Activated CD4-positive, alpha-beta memory T cell treated with anti-CD3 and anti-CD28 coated beads for 36 hours (primary cell): ENCODE measurements at regions of chr10 and their contacts with region 1.

Region 1: DNA sequence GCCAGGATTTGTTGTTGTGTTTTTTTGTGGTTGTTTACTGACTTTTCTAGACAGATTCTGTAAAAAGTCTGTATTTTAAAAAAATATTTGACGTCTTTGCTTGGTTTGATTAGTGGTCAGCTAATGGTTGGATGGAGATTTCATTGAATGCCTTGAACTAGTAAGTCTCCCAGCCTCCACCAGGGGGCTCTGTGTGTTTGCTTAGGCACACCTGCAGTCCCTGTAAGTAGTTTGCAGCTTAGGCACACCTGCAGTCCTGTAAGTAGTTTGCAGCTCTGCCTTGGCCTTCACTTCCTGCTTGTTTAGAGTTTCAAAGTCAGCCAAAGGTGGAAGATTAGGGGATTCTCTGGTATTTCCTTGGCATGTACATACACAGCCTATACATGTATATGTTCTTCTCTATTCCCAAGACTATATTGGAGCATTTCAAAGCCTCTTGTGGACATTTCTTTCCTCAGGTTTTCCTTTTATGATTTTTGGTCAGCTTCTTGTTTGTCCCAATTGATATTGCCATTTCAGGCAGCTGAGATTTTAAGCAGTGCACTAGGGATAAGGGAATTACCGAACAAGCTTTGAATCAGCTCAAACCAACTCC is 101.6 kb downstream of the CCSER2 start:
- DNase-seq: peak; percentile 76
- H3K4me3 Mint-ChIP-seq: no peak overlapping the region
- H3K27ac Mint-ChIP-seq: no peak overlapping the region
- H3K4me1 Mint-ChIP-seq: peaks cover 31% of the 10 kb centered on the region
- H3K27me3 Mint-ChIP-seq: no peaks in the 10 kb centered on the region

Region 2: GRCh38 chr10:84333864-84334451 is 96.1 kb before region 1 on chr10:
- CTCF ChIA-PET with region 1: interaction called, 11 read pairs
- POLR2A ChIA-PET with region 1: no interaction called
- intact Hi-C with region 1: no loop called
- DNase-seq: peak; percentile 82
- H3K4me3 Mint-ChIP-seq: peak overlapping the region; percentile 36
- H3K27ac Mint-ChIP-seq: peak overlapping the region; percentile 78
- H3K4me1 Mint-ChIP-seq: peaks cover 40% of the 10 kb centered on the region
- H3K27me3 Mint-ChIP-seq: no peaks in the 10 kb centered on the region

Region 3: GRCh38 chr10:84397735-84398144 is 32.3 kb before region 1 on chr10:
- CTCF ChIA-PET with region 1: interaction called, 12 read pairs
- POLR2A ChIA-PET with region 1: no interaction called
- intact Hi-C with region 1: no loop called
- DNase-seq: no peak
- H3K4me3 Mint-ChIP-seq: no peak overlapping the region
- H3K27ac Mint-ChIP-seq: peak overlapping the region; percentile 6
- H3K4me1 Mint-ChIP-seq: peaks cover 27% of the 10 kb centered on the region
- H3K27me3 Mint-ChIP-seq: no peaks in the 10 kb centered on the region

Region 4: DNA sequence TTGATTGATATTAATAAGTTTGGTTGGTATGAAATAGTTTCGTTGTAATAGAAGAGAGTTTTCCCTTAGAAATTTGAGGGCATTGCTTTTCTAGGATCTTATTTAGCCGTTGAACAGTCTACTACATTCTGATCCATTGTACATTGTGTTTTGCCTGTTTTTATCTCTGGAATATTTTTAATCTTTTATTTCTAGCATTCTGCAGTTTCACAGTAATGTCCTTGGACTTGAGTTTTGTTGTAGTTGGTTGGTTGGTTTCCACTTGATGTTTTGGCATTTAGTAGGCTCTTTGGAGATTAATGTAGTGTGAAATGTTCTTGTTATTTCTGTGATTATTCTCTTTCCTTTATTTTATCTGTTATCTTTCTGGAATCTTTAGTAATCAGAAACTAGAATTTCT is 10.8 kb after region 1 on chr10:
- CTCF ChIA-PET with region 1: interaction called, 20 read pairs
- POLR2A ChIA-PET with region 1: no interaction called
- intact Hi-C with region 1: no loop called
- DNase-seq: no peak
- H3K4me3 Mint-ChIP-seq: no peak overlapping the region
- H3K27ac Mint-ChIP-seq: no peak overlapping the region
- H3K4me1 Mint-ChIP-seq: peaks cover 3% of the 10 kb centered on the region
- H3K27me3 Mint-ChIP-seq: no peaks in the 10 kb centered on the region

Region 5: DNA sequence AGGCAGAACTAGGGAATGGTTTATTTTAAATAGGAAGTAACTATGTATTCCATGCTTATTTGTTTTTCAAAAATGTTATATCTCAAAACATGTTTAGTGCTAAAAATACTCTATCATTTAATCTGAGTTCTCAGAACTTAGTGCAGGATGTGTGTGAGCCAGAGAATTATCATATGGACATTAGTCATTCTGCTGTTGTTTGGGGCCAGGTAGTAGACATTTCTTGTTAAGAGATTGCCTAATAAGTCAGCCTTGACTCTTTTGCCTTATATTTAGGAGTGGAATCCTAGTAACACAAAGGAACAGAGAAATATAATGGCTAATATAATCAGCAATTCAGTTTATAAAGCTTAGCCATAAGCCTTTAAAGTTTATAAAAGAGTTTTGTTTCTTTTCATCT is 48.1 kb after region 1 on chr10:
- CTCF ChIA-PET with region 1: interaction called, 4 read pairs
- POLR2A ChIA-PET with region 1: no interaction called
- intact Hi-C with region 1: loop called (anchors 5 kb)
- DNase-seq: no peak
- H3K4me3 Mint-ChIP-seq: no peak overlapping the region
- H3K27ac Mint-ChIP-seq: no peak overlapping the region
- H3K4me1 Mint-ChIP-seq: peaks cover 6% of the 10 kb centered on the region
- H3K27me3 Mint-ChIP-seq: no peaks in the 10 kb centered on the region